CD4-positive, alpha-beta T cell (primary cell): ENCODE measurements at regions of chr19 and their contacts with region 1.

Region 1: DNA sequence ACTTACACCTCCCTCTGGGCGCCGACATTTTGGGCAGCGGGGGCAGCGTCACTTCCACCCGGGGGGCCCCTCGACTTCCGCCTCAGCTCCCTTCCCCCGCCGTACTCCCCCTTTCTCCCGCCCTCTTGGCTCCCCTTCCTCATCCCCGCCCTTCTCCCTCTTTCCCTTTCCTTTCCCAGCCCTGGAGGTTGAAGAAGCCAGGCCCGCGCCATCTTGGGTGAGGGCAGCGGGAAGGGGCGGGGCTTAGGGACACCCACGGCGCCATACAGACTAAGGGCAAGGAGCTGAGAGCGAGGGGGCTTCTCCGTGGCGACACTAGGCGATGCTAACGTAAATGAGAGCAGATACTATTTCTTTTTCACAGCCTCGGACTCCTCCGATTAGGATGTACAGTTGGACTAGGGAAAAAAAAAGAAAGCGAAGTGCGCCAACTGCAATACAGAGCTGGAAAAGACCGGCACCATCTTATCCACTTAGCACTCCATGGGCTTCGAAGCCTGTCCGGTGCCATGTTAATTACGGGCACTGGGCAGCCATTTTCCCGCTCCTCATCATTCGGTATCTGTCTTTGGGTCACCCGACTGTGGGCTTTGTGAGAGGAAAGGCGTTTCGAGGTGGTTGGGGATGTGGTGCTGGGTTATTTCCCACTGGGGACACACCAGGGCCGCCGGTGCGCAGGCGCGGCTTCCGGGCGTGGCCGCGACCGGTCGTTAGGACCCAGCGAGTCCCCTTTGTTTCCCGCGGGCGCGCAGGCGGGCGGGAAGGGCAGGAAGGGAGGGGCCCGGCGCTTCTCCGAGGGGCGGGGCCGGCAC is at the start of gene FIZ1:
- DNase-seq: peak; percentile 89 to 98 (median 94)
- ATAC-seq: peak; percentile 71
- H3K4me3 ChIP-seq: peak within 1 kb of the TSS; percentile 95
- H3K4me3 Mint-ChIP-seq: peak within 1 kb of the TSS; percentile 99
- H3K27ac ChIP-seq: peak within 1 kb of the TSS; percentile 95 to 97
- H3K27ac Mint-ChIP-seq: peak within 1 kb of the TSS; percentile 95
- H3K4me1 ChIP-seq: peaks cover 36% of the 10 kb centered on the region
- H3K4me1 Mint-ChIP-seq: peaks cover 26% of the 10 kb centered on the region
- H3K27me3 ChIP-seq: no peaks in the 10 kb centered on the region
- H3K27me3 Mint-ChIP-seq: no peaks in the 10 kb centered on the region
- CTCF ChIP-seq: no peak
- total RNA-seq, gene FIZ1: 5.5 to 7.3 TPM

Region 2: DNA sequence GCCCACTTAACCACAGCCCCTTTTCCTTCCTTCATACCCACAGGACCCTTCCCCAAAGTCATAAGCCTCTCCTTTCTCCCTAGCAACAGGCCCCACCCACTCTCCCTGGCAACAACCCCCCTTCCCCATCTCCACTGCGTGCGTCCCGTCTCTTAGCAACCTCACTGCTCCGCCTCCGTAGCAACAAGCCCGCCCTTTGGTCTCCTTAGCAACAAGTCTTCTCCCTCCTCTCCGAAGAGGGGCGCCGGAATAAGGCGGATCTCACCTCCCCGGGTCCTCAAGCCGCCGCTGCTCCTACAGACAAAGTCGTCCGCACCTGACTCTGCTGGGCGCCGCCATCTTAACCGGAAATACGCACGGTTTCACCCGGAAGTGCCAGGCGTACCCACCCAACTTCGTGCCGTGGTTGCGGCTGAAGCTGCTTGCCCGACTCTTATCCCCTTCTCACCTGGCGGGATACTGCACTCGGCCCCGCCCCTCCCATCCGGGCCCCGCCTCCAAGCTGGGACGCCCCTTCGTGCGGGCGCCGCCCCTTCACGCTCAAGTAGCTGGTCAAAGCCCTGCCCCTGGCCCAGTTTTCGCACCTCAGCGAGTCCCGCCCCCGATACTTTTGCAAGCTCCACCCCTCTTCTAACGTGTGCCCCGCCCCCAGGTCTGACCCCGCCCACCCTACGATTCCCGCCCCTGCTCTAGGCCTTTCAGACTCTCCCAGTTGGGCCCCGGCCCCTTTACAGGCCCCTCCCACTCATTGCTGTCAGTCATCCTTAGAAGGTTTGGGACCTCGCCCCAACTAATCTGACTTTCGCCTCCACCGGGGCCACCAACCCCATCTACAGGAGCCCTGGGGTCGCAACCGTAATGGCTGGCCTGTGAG is 319.7 kb before region 1 on chr19 and contains the start of gene HSPBP1:
- CTCF ChIA-PET with region 1: no interaction called
- POLR2A ChIA-PET with region 1: interaction called, 8 read pairs
- intact Hi-C with region 1: loop called in 1 of 2 experiments (anchors 5 kb)
- DNase-seq: peak; percentile 88 to 98 (median 92)
- ATAC-seq: peak; percentile 86
- H3K4me3 ChIP-seq: peak within 1 kb of the TSS; percentile 73
- H3K4me3 Mint-ChIP-seq: peak within 1 kb of the TSS; percentile 98
- H3K27ac ChIP-seq: peak within 1 kb of the TSS; percentile 79 to 88
- H3K27ac Mint-ChIP-seq: peak within 1 kb of the TSS; percentile 93
- H3K4me1 ChIP-seq: peaks cover 41% of the 10 kb centered on the region
- H3K4me1 Mint-ChIP-seq: peaks cover 42% of the 10 kb centered on the region
- H3K27me3 ChIP-seq: no peaks in the 10 kb centered on the region
- H3K27me3 Mint-ChIP-seq: no peaks in the 10 kb centered on the region
- CTCF ChIP-seq: no peak
- total RNA-seq, gene HSPBP1: 14.3 to 15.1 TPM

Region 3: DNA sequence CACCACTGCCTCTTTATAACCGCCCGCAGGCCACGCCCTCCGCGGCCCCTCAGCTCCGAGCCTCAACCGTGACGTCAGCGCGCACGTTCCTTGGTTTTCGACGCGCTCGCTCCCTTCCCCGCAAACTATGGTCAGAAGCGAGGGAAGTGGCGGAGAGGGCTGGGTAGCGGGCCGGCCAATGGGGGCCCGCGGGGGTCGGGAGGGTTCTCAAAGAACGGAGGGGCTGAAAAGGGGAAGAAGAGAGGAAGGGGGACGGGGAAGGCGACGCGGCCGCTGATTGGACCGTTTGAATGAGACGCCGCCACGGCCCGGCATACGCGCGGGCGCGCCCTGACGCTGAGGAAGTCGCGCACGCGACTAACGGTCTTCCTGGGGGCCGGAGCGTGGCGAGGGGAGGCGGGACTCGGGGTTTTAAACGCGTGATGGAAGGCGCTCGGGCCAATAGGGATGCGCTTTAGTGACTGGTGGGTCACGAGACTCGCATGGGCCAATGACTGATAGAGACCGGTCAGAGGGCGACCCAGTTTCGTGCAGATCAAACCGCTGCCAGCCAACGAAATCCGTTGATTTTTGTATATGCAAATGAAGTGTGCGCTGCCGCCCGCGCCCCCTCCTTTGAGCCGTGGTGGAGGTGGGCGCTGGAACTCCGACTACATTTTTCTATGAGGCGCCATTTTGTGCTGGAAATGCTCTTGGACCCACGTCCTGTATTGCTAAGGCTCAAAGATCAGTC is 191.7 kb before region 1 on chr19:
- CTCF ChIA-PET with region 1: no interaction called
- POLR2A ChIA-PET with region 1: interaction called, 6 read pairs
- intact Hi-C with region 1: loop called in 1 of 2 experiments (anchors 10 kb)
- DNase-seq: peak; percentile 91 to 99 (median 96)
- ATAC-seq: peak; percentile 92
- H3K4me3 ChIP-seq: peak overlapping the region; percentile 61
- H3K4me3 Mint-ChIP-seq: peak overlapping the region; percentile 94
- H3K27ac ChIP-seq: peak overlapping the region; percentile 96 to 100
- H3K27ac Mint-ChIP-seq: peak overlapping the region; percentile 99
- H3K4me1 ChIP-seq: peaks cover 30% of the 10 kb centered on the region
- H3K4me1 Mint-ChIP-seq: peaks cover 29% of the 10 kb centered on the region
- H3K27me3 ChIP-seq: no peaks in the 10 kb centered on the region
- H3K27me3 Mint-ChIP-seq: no peaks in the 10 kb centered on the region
- CTCF ChIP-seq: no peak

Region 4: DNA sequence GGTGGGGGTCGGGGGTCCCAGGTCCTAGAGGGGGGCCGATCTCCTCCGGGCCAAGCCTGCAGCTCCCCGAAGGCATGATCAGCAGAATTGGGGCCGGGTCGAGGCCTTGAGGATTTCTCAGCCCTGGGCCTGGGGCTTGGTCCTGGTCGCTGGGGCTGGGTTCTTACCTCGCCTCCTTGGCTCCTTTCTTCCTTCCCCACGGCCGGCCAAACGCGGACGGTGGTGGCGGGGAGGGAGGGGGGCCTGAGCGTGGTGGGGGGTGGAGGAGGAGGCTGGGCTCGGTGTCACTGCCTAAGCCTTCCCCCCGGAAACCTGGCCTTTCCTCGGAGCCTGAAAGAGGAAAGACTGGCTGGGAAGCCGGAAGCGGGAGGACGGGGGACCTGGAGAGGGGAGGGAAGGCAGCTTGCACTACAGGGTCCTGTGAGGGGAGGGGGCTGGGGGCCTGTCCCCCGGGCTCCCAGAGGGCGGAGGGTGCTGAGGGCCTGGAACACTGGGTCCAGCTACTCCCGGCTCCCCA is 19.0 kb before region 1 on chr19 and contains the start of gene ZNF579:
- CTCF ChIA-PET with region 1: interaction called, 3 read pairs
- POLR2A ChIA-PET with region 1: interaction called, 23 read pairs
- intact Hi-C with region 1: loop called in 1 of 2 experiments (anchors 2 kb)
- DNase-seq: peak; percentile 53 to 84 (median 66)
- ATAC-seq: peak; percentile 69
- H3K4me3 ChIP-seq: peak within 1 kb of the TSS; percentile 78
- H3K4me3 Mint-ChIP-seq: peak within 1 kb of the TSS; percentile 89
- H3K27ac ChIP-seq: peak within 1 kb of the TSS; percentile 52 to 69
- H3K27ac Mint-ChIP-seq: peak within 1 kb of the TSS; percentile 86
- H3K4me1 ChIP-seq: peaks cover 25% of the 10 kb centered on the region
- H3K4me1 Mint-ChIP-seq: peaks cover 31% of the 10 kb centered on the region
- H3K27me3 ChIP-seq: no peaks in the 10 kb centered on the region
- H3K27me3 Mint-ChIP-seq: no peaks in the 10 kb centered on the region
- CTCF ChIP-seq: no peak
- total RNA-seq, gene ZNF579: 6.7 to 7.1 TPM

Region 5: GRCh38 chr19:55624109-55625003 is 24.7 kb after region 1 on chr19 and contains the start of gene ZNF784:
- CTCF ChIA-PET with region 1: interaction called, 4 read pairs
- POLR2A ChIA-PET with region 1: interaction called, 42 read pairs
- intact Hi-C with region 1: loop called in 1 of 2 experiments (anchors 1 kb)
- DNase-seq: peak; percentile 88 to 98 (median 93)
- ATAC-seq: peak; percentile 69
- H3K4me3 ChIP-seq: peak within 1 kb of the TSS; percentile 68
- H3K4me3 Mint-ChIP-seq: peak within 1 kb of the TSS; percentile 98
- H3K27ac ChIP-seq: peak within 1 kb of the TSS; percentile 89 to 94
- H3K27ac Mint-ChIP-seq: peak within 1 kb of the TSS; percentile 100
- H3K4me1 ChIP-seq: peaks cover 56% of the 10 kb centered on the region
- H3K4me1 Mint-ChIP-seq: peaks cover 55% of the 10 kb centered on the region
- H3K27me3 ChIP-seq: no peaks in the 10 kb centered on the region
- H3K27me3 Mint-ChIP-seq: no peaks in the 10 kb centered on the region
- CTCF ChIP-seq: no peak
- total RNA-seq, gene ZNF784: 11.2 to 11.8 TPM

Region 6: DNA sequence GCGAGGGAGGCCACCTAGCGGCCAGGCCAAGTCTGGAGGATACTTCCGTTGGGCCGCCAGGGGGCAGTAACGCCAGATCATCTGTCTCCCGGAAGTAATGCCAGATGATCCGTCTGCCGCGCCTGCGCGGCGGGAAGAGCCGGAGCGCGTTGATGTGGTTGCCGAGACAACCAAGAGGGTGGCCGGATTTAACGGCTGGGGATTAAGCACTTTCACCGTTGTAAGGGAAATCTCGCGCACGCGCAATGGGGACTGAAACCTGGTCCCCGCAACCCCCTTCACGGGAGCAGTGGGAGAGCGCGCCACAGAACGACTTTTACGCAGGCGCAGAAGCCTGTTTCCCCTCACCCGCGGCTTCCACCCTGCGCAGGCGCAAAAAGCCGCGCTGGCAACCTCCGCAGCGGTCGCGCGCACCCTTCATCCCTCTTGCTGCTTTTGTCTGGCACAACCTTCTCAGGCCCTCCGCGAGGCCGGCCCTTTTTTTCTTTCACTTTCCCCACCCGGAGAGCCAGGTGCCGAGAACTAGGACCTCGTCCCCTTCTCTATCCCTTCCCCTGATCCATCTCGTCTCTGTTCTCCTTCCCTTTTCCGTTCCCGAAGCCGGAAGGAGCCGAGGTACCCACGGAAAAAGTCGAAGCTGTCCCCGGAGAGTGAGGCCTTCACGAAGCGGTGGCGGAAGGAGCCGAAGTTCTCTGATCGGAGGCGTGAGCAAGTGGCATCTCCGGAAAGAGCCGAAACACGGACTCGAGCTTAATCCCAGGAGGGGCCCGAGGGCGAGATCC is 54.3 kb after region 1 on chr19:
- CTCF ChIA-PET with region 1: interaction called, 6 read pairs
- POLR2A ChIA-PET with region 1: interaction called, 38 read pairs
- intact Hi-C with region 1: loop called (anchors 1 kb)
- DNase-seq: peak; percentile 98 to 100 (median 100)
- ATAC-seq: peak; percentile 79
- H3K4me3 ChIP-seq: peak overlapping the region; percentile 70
- H3K4me3 Mint-ChIP-seq: peak overlapping the region; percentile 94
- H3K27ac ChIP-seq: peak overlapping the region; percentile 96 to 100
- H3K27ac Mint-ChIP-seq: peak overlapping the region; percentile 93
- H3K4me1 ChIP-seq: peaks cover 46% of the 10 kb centered on the region
- H3K4me1 Mint-ChIP-seq: peaks cover 43% of the 10 kb centered on the region
- H3K27me3 ChIP-seq: no peaks in the 10 kb centered on the region
- H3K27me3 Mint-ChIP-seq: no peaks in the 10 kb centered on the region
- CTCF ChIP-seq: peak; percentile 100